Activated CD8-positive, alpha-beta T cell treated with anti-CD3 and anti-CD28 coated beads for 36 hours (primary cell): ENCODE measurements at regions of chr10 and their contacts with region 1.

Region 1: DNA sequence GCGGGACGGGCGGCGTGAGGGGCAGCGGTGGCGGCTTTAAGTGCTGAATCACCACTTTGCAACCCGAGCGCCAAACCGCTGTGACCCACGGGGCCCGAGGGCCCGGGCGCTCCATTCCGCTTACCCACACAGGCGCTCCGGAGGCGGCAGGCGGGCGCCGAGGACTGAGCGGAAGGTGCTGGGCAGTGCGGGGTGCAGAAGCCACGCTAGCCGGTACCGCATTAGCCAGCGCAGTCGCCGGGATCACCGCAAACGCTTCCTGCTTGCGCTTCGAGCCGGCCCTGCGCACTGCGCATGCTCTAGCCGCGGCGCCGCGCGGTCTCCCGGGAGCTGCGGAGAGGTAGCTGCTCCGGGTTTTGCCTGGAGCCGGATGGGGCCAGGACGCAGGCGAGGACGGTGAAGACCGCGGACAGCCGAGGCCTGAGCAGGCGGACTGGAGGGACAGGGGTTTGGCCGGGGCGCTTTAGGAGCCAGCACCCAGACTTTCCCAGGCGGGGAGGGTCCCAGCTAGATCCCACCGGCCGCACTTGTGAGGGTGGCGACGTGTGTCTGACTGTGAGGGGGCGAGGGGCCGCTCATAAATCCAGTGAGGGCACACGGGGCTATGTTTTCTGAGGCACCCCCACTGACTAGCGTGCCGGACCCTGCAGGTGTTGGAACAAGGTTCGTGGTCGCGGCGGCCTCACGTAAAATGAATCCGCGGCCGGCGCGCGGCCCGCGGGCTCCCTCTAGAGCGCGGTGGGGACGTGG is at the start of gene IDE:
- DNase-seq: peak; percentile 86
- ATAC-seq: peak; percentile 79
- H3K4me3 Mint-ChIP-seq: peak within 1 kb of the TSS; percentile 71
- H3K27ac Mint-ChIP-seq: peak within 1 kb of the TSS; percentile 90
- H3K4me1 Mint-ChIP-seq: peaks cover 33% of the 10 kb centered on the region
- H3K27me3 Mint-ChIP-seq: no peaks in the 10 kb centered on the region
- CTCF ChIP-seq: no peak
- total RNA-seq, gene IDE: 30.1 to 33.2 TPM

Region 2: DNA sequence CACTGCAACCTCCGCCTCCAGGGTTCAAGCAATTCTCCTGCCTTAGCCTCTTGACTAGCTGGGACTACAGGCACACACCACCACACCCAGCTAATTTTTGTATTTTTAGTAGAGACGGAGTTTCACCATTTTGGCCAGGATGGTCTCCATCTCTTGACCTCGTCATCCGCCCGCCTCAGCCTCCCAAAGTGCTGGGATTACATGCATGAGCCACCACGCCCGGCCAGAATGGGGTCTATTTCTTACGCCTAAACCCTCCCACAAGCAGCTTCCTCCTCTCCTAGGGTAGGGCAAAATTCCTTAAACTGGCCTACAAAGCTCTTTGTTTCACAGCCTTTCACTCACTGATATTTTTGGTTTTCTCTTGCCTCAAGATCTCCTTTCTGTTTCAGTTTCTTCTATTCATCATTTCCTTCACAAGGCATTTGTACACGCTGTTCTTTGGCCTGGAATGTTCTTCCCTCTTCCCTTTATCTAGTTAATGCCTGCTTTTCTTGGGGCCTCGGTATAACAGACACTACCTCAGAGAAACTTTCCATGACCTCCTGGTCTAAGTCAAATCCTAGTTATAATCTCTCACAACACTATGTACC is 289.8 kb before region 1 on chr10:
- CTCF ChIA-PET with region 1: no interaction called
- POLR2A ChIA-PET with region 1: no interaction called
- intact Hi-C with region 1: no loop called
- DNase-seq: no peak
- ATAC-seq: no peak
- H3K4me3 Mint-ChIP-seq: no peak overlapping the region
- H3K27ac Mint-ChIP-seq: no peak overlapping the region
- H3K4me1 Mint-ChIP-seq: peaks cover 12% of the 10 kb centered on the region
- H3K27me3 Mint-ChIP-seq: no peaks in the 10 kb centered on the region
- CTCF ChIP-seq: no peak

Region 3: DNA sequence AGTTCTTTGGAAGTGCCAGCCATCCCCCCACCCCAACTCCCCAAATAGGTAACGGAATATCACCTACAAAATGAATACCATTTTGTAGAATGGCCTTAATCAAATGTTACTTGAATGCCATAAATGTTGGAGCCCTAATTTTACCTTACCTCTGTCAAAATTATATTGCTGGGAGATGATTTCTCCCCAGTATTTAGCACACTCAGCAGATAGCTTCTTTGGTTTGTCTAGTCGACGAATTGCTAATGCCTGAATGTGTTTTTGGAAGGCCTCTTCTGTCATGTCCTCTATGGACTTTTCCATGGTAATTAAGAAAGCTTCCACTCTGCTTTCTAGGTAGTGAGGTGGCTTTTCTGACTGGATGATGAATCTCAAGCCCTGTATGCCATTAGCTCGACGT is 110.4 kb before region 1 on chr10:
- CTCF ChIA-PET with region 1: no interaction called
- POLR2A ChIA-PET with region 1: no interaction called
- intact Hi-C with region 1: no loop called
- DNase-seq: no peak
- ATAC-seq: no peak
- H3K4me3 Mint-ChIP-seq: no peak overlapping the region
- H3K27ac Mint-ChIP-seq: no peak overlapping the region
- H3K4me1 Mint-ChIP-seq: no peaks in the 10 kb centered on the region
- H3K27me3 Mint-ChIP-seq: no peaks in the 10 kb centered on the region
- CTCF ChIP-seq: no peak

Region 4: DNA sequence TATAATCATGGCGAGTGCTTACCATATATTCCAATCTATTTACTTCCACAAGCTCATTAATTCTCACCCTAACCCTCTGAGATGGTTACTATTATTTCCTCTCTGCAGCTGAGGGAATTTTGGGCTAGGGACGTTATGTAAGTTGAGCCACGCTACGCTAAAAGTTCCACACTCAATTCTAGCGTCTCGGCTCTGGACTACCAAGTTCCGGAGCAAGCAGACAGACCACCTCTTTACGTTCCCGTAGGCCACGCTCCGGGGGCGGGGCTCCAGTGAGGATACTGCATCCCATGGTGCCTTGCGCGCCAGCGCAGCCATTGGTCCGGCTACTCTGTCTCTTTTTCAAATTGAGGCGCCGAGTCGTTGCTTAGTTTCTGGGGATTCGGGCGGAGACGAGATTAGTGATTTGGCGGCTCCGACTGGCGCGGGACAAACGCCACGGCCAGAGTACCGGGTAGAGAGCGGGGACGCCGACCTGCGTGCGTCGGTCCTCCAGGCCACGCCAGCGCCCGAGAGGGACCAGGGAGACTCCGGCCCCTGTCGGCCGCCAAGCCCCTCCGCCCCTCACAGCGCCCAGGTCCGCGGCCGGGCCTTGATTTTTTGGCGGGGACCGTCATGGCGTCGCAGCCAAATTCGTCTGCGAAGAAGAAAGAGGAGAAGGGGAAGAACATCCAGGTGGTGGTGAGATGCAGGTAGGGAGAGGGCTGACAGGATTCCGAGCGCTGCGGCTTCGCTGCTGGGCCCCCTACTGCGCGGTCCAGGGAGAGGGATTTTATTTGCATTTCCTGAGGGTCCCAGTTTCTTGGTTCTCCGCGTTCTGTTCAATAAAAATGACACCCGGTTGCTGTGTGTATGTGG is 19.0 kb after region 1 on chr10 and contains the start of gene KIF11:
- CTCF ChIA-PET with region 1: interaction called, 37 read pairs
- POLR2A ChIA-PET with region 1: interaction called, 12 read pairs
- intact Hi-C with region 1: loop called (anchors 2 kb)
- DNase-seq: peak; percentile 100
- ATAC-seq: peak; percentile 86
- H3K4me3 Mint-ChIP-seq: peak within 1 kb of the TSS; percentile 95
- H3K27ac Mint-ChIP-seq: peak within 1 kb of the TSS; percentile 98
- H3K4me1 Mint-ChIP-seq: peaks cover 23% of the 10 kb centered on the region
- H3K27me3 Mint-ChIP-seq: peaks cover 4% of the 10 kb centered on the region
- CTCF ChIP-seq: no peak
- total RNA-seq, gene KIF11: 43.8 to 44.4 TPM